ENCODE measurements at regions of chr7 and their contacts with region 1.

Region 1: GRCh38 chr7:113015032-113015645 is 71.5 kb downstream of the GPR85 start:
- DNase-seq: peak; percentile 15
- H3K4me3 ChIP-seq: no peak overlapping the region
- H3K27ac ChIP-seq: no peak overlapping the region
- H3K4me1 ChIP-seq: no peaks in the 10 kb centered on the region
- H3K27me3 ChIP-seq: no peaks in the 10 kb centered on the region
- CTCF ChIP-seq: peak; percentile 59

Region 2: DNA sequence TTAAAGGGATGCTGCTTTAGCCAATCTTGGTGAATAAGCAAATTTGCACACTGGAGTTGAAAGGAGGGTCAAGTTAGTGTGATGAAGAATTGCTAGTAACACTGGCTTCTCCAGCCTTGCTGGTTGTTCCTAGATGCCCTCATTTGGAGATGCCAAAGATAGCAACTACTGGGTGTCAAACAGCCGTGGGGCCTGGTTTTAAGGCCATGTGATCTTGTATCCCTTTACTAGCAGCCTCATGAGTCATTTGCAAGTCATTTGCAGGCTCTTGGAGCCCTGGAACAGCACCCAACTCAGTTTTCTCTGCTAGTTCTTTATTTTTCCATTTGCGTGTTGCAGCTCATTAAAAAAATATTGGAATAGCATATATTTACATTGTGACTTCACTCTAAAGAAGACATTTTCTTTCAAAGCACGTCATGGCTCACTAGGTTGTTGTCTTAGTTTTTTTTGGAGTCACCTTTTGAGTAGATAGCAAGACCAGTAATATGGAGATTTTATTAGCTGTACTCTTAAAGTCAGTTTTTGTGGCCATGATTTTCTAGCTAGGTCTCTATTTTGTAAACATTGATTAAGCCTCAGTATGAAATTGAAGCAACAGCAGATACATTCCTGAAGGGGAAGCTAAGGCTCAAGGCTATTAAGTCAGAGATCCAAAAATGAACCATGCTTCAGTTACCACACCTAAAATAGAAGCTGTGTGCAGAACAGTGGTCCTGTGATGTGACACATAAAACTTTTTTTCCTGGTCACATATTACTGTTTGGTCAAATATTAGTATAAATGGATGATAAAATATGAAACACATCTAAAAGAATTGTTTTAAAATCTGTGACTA is 533.1 kb before region 1 on chr7:
- CTCF ChIA-PET with region 1: no interaction called
- POLR2A ChIA-PET with region 1: no interaction called
- intact Hi-C with region 1: no loop called
- DNase-seq: peak; percentile 16
- H3K4me3 ChIP-seq: no peak overlapping the region
- H3K27ac ChIP-seq: no peak overlapping the region
- H3K4me1 ChIP-seq: peaks cover 11% of the 10 kb centered on the region
- H3K27me3 ChIP-seq: no peaks in the 10 kb centered on the region
- CTCF ChIP-seq: no peak

Region 3: GRCh38 chr7:113289140-113289740 is 274.1 kb after region 1 on chr7:
- CTCF ChIA-PET with region 1: no interaction called
- POLR2A ChIA-PET with region 1: no interaction called
- intact Hi-C with region 1: loop called (anchors 10 kb)
- DNase-seq: peak; percentile 23
- H3K4me3 ChIP-seq: no peak overlapping the region
- H3K27ac ChIP-seq: no peak overlapping the region
- H3K4me1 ChIP-seq: no peaks in the 10 kb centered on the region
- H3K27me3 ChIP-seq: no peaks in the 10 kb centered on the region
- CTCF ChIP-seq: peak; percentile 48